ENCODE measurements at regions of chr17 and their contacts with region 1.

Region 1: GRCh38 chr17:75205037-75205792 is at the start of gene NUP85:
- DNase-seq: peak; percentile 93
- H3K4me3 Mint-ChIP-seq: peak within 1 kb of the TSS; percentile 98
- H3K27ac Mint-ChIP-seq: peak within 1 kb of the TSS; percentile 100
- H3K4me1 Mint-ChIP-seq: peaks cover 30% of the 10 kb centered on the region
- H3K27me3 Mint-ChIP-seq: no peaks in the 10 kb centered on the region
- total RNA-seq, gene NUP85: 140 to 172 TPM

Region 2: GRCh38 chr17:75155191-75155601 is 50.0 kb before region 1 on chr17:
- CTCF ChIA-PET with region 1: no interaction called
- POLR2A ChIA-PET with region 1: no interaction called
- DNase-seq: no peak
- H3K4me3 Mint-ChIP-seq: peak overlapping the region; percentile 92
- H3K27ac Mint-ChIP-seq: peak overlapping the region; percentile 91
- H3K4me1 Mint-ChIP-seq: peaks cover 33% of the 10 kb centered on the region
- H3K27me3 Mint-ChIP-seq: no peaks in the 10 kb centered on the region

Region 3: GRCh38 chr17:75182569-75183450 is 22.4 kb before region 1 on chr17 and contains the start of gene SUMO2:
- CTCF ChIA-PET with region 1: interaction called, 47 read pairs
- POLR2A ChIA-PET with region 1: no interaction called
- DNase-seq: peak; percentile 93
- H3K4me3 Mint-ChIP-seq: peak within 1 kb of the TSS; percentile 84
- H3K27ac Mint-ChIP-seq: peak within 1 kb of the TSS; percentile 99
- H3K4me1 Mint-ChIP-seq: peaks cover 43% of the 10 kb centered on the region
- H3K27me3 Mint-ChIP-seq: no peaks in the 10 kb centered on the region
- total RNA-seq, gene SUMO2: 527 to 642 TPM

Region 4: GRCh38 chr17:75191584-75191983 is 13.6 kb before region 1 on chr17:
- CTCF ChIA-PET with region 1: interaction called, 47 read pairs
- POLR2A ChIA-PET with region 1: no interaction called
- DNase-seq: no peak
- H3K4me3 Mint-ChIP-seq: no peak overlapping the region
- H3K27ac Mint-ChIP-seq: no peak overlapping the region
- H3K4me1 Mint-ChIP-seq: peaks cover 14% of the 10 kb centered on the region
- H3K27me3 Mint-ChIP-seq: no peaks in the 10 kb centered on the region